ENCODE measurements at regions of chr16 and their contacts with region 1.

Region 1: DNA sequence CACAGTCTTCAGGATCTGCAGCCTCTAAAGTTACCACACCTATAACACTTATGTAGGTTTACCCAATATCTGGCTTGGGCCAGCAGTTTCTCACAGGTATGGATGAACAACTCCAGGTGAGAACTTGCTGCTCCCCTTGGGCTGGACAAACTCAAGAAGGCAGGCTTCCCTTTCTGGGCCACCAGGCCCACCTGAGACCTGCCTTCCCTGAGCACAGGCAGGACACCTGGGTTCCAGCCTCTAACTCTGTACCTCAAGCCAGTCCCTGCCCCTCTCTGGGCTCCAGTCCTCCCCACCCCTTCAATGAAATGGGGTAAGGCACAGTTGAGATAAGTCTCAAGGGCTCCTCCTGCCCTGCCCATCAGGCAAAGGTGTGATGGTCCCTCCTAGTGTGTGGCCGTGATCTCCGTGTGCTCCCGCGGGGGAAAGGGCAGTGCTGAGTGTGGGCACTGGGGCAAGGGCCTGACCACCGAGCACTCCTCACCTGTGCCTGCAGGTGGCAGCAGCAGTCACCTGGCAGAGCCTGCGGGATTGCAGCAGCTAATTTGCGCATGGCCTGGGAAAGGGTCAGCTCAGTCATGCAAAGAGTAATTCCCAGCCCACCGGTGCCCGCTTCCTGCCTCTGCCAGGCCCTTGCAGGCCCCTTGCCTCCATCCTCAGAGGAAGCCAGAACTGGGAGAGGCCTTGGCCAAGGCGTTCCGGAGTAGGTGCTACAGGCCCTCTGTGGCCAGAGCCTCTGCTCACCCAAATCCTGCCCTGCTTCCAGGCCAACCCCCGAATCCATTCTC is 28.2 kb upstream of the ADGRG1 start:
- DNase-seq: peak; percentile 32
- ATAC-seq: peak; percentile 85
- H3K4me3 ChIP-seq: no peak overlapping the region
- H3K27ac ChIP-seq: no peak overlapping the region
- H3K4me1 ChIP-seq: no peaks in the 10 kb centered on the region
- H3K27me3 ChIP-seq: peaks cover 28% of the 10 kb centered on the region
- CTCF ChIP-seq: peak; percentile 63
- POLR2A ChIP-seq: no peak
- RAD21 ChIP-seq: peak; percentile 71

Region 2: DNA sequence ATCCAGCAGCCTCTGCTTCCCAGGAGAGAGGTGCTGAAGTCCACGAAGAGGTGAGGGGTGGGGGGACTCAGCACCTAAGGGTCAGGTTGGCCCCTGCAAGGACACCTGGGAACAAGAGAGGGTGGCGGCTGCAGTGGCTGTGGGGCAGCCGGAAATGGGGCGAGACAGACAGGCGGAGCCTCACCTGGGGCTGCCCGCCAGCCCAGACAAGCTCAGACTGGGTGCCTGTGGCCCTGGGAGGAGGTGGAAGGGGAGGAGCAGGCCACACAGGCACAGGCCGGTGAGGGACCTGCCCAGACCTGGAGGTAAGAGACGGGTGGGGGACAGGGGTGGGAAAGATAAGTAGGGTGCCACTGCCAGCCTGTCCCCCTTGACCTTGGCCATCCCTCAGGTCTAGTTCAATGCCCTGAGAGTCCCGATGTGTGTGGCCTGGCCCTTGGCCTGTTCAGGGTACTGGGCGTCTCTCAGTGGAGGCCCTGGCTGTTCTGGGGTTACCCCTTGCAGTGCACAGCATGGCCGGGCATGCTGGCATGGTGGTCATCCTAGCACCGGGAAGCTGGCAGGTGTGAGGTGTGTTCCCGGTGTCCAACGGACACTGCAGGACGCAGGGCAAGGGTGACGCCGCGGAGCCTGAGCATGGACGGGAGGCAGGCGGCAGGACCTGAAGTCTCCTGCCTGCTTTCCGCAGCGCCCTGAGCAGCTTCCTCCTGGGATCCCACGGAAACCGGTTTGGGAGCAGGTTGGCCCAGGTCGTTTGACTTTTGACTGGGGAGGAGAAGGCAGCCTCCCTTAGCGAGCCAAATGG is 19.8 kb after region 1 on chr16:
- CTCF ChIA-PET with region 1: no interaction called
- POLR2A ChIA-PET with region 1: no interaction called
- dilution Hi-C with region 1: no loop called
- in situ Hi-C with region 1: no loop called
- intact Hi-C with region 1: no loop called
- DNase-seq: no peak
- ATAC-seq: no peak
- H3K4me3 ChIP-seq: no peak overlapping the region
- H3K27ac ChIP-seq: no peak overlapping the region
- H3K4me1 ChIP-seq: peaks cover 19% of the 10 kb centered on the region
- H3K27me3 ChIP-seq: no peaks in the 10 kb centered on the region
- CTCF ChIP-seq: no peak
- POLR2A ChIP-seq: no peak
- RAD21 ChIP-seq: no peak

Region 3: DNA sequence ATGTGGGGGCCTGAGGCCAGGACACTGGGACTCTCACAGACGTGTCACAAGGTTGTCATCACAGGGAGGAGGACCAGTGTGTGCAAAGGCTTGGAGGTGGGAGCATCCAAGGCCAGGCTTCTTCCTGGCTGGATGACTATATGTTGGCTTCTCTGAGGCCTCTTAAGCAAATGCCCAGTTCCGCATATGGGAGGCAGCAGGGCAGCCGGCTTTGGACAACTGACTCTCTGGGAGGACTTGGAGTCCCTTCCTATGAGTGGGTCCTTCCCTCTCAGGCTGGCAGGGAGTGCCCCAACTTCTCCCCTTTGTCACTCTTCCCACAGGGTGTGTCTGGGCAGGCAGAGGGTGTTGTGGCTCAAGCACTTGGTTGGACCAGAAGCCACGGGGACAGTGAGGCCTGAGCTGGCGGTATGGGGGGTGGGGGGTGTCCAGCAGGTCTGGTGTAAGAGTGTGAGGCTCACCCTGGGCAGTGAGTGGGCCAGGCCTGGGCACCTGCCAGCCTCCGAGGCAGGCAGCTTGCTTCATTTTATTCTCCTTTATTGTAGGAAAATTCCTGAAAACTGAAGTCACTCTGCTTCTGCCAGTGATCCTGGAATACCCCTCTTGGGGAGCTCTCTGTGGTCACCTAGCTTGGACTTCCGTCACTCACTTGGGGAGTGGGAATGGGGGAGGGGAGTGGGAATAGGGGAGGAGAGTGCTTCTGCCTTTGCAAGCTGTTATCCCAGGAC is 43.1 kb after region 1 on chr16:
- CTCF ChIA-PET with region 1: interaction called, 3 read pairs
- POLR2A ChIA-PET with region 1: no interaction called
- dilution Hi-C with region 1: no loop called
- in situ Hi-C with region 1: loop called (anchors 5 kb)
- intact Hi-C with region 1: loop called (anchors 2 kb)
- DNase-seq: peak; percentile 70
- ATAC-seq: peak; percentile 50
- H3K4me3 ChIP-seq: no peak overlapping the region
- H3K27ac ChIP-seq: no peak overlapping the region
- H3K4me1 ChIP-seq: peaks cover 8% of the 10 kb centered on the region
- H3K27me3 ChIP-seq: peaks cover 9% of the 10 kb centered on the region
- CTCF ChIP-seq: no peak
- POLR2A ChIP-seq: no peak
- RAD21 ChIP-seq: no peak

Measured in IMR-90 (cell line).